ENCODE measurements at regions of chr15 and their contacts with region 1.

Region 1: GRCh38 chr15:60585743-60586708 is 107.1 kb upstream of the ICE2 start:
- DNase-seq: peak; percentile 78
- ATAC-seq: peak; percentile 81
- H3K4me3 ChIP-seq: no peak overlapping the region
- H3K27ac ChIP-seq: no peak overlapping the region
- H3K4me1 ChIP-seq: peaks cover 17% of the 10 kb centered on the region
- H3K27me3 ChIP-seq: no peaks in the 10 kb centered on the region
- CTCF ChIP-seq: peak; percentile 92
- POLR2A ChIP-seq: 0 out of 2 replicates have a peak, but pooled peaks have one; percentile 37
- RAD21 ChIP-seq: peak; percentile 92

Region 2: DNA sequence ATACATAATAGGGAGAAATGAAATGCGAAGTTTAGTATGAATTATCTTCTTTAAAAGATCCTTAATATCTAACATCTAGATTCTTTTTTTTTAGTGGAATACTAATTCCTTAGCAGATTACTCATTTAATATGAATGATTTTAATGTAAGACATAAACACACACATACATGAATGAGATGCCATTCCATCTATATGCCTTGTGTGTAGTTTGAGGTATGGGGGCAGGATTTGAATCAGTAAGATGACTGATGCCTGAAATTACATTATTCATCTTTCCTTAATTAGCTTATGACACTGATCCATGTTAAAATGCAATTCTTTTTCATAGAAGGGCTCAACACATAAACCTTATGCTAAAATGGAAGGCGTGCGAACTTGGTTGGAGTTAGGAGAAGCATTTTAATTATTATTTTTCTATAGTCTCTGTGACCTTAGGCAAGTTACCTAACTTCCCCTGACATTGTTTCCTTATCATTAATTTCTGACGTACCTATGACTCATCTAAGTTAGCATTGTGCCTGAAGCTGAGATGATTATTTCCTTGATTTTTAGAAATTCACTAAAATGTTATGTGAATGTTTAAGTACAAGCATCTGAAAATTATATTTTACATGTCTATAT is 886.1 kb before region 1 on chr15:
- CTCF ChIA-PET with region 1: no interaction called
- POLR2A ChIA-PET with region 1: no interaction called
- dilution Hi-C with region 1: no loop called
- in situ Hi-C with region 1: no loop called
- intact Hi-C with region 1: no loop called
- DNase-seq: peak; percentile 24
- ATAC-seq: no peak
- H3K4me3 ChIP-seq: no peak overlapping the region
- H3K27ac ChIP-seq: no peak overlapping the region
- H3K4me1 ChIP-seq: no peaks in the 10 kb centered on the region
- H3K27me3 ChIP-seq: no peaks in the 10 kb centered on the region
- CTCF ChIP-seq: no peak
- POLR2A ChIP-seq: no peak
- RAD21 ChIP-seq: no peak

Region 3: GRCh38 chr15:60340207-60340921 is 245.7 kb before region 1 on chr15:
- CTCF ChIA-PET with region 1: no interaction called
- POLR2A ChIA-PET with region 1: no interaction called
- dilution Hi-C with region 1: no loop called
- in situ Hi-C with region 1: no loop called
- intact Hi-C with region 1: no loop called
- DNase-seq: no peak
- ATAC-seq: peak; percentile 31
- H3K4me3 ChIP-seq: no peak overlapping the region
- H3K27ac ChIP-seq: no peak overlapping the region
- H3K4me1 ChIP-seq: no peaks in the 10 kb centered on the region; the same call in 1 of the 2 replicates
- H3K27me3 ChIP-seq: no peaks in the 10 kb centered on the region
- CTCF ChIP-seq: 0 out of 2 replicates have a peak, but pooled peaks have one; percentile 13
- POLR2A ChIP-seq: no peak
- RAD21 ChIP-seq: no peak

Region 4: GRCh38 chr15:60507596-60508424 is 78.2 kb before region 1 on chr15:
- CTCF ChIA-PET with region 1: no interaction called
- POLR2A ChIA-PET with region 1: no interaction called
- dilution Hi-C with region 1: no loop called
- in situ Hi-C with region 1: no loop called
- intact Hi-C with region 1: loop called (anchors 2 kb)
- DNase-seq: peak; percentile 77
- ATAC-seq: peak; percentile 98
- H3K4me3 ChIP-seq: no peak overlapping the region
- H3K27ac ChIP-seq: no peak overlapping the region
- H3K4me1 ChIP-seq: no peaks in the 10 kb centered on the region
- H3K27me3 ChIP-seq: no peaks in the 10 kb centered on the region
- CTCF ChIP-seq: peak; percentile 95
- POLR2A ChIP-seq: no peak
- RAD21 ChIP-seq: peak; percentile 87

Region 5: DNA sequence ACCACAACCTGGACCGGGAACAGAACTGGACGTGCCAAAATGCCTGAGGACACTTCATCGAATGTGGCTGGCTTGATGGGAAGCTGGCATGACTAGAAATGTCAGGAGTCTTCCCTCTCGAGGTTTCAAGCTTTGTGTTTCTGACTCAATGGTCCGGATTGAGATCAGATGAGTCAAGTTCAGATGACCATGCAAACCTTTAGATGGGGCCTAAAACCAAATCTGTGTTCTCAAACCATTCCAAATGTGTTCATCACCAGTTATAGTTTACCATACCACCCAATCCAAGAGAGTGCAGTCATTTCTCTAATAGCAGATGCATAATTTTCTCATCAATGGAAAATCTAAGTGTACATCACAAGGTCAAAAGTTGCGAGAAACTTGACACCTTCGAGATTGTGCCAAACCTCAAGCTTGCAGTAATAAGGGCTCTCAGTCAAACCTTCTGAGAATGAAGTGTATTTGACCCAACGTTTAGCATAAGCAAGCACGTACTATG is 274.0 kb after region 1 on chr15:
- CTCF ChIA-PET with region 1: no interaction called
- POLR2A ChIA-PET with region 1: no interaction called
- dilution Hi-C with region 1: no loop called
- in situ Hi-C with region 1: no loop called
- intact Hi-C with region 1: loop called (anchors 5 kb)
- DNase-seq: peak; percentile 91
- ATAC-seq: peak; percentile 90
- H3K4me3 ChIP-seq: no peak overlapping the region
- H3K27ac ChIP-seq: no peak overlapping the region
- H3K4me1 ChIP-seq: peaks cover 3% of the 10 kb centered on the region; the same call in 1 of the 2 replicates
- H3K27me3 ChIP-seq: peaks cover 6% of the 10 kb centered on the region; the same call in 1 of the 2 replicates
- CTCF ChIP-seq: no peak
- POLR2A ChIP-seq: no peak
- RAD21 ChIP-seq: no peak

Region 6: DNA sequence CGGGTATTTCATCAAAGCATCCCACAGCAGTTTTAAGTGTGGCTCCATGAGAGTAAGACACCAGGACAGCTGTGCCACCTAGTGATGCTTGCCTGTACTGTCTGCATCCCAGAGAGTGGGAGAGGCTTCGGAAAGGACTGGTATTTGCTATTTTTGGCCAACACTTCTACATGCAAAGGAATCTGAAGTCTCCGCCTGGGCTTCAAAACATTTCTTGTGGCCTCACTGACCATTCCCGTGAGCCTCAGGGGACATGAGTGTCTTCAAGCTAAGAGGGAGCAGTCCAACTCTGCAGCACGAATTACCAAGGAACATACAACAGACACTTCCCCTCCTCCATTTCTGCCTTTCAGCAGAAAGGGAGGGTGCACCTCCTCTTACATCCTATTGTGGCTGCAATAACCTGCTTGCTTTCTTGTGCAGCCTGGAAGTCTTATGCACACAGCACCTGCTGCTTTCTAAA is 465.6 kb after region 1 on chr15:
- CTCF ChIA-PET with region 1: interaction called, 11 read pairs
- POLR2A ChIA-PET with region 1: no interaction called
- dilution Hi-C with region 1: no loop called
- in situ Hi-C with region 1: loop called (anchors 5 kb)
- intact Hi-C with region 1: loop called (anchors 1 kb)
- DNase-seq: peak; percentile 78
- ATAC-seq: peak; percentile 95
- H3K4me3 ChIP-seq: no peak overlapping the region
- H3K27ac ChIP-seq: no peak overlapping the region
- H3K4me1 ChIP-seq: peaks cover 15% of the 10 kb centered on the region
- H3K27me3 ChIP-seq: peaks cover 3% of the 10 kb centered on the region; the same call in 1 of the 2 replicates
- CTCF ChIP-seq: peak; percentile 88
- POLR2A ChIP-seq: no peak
- RAD21 ChIP-seq: peak; percentile 90

Region 7: DNA sequence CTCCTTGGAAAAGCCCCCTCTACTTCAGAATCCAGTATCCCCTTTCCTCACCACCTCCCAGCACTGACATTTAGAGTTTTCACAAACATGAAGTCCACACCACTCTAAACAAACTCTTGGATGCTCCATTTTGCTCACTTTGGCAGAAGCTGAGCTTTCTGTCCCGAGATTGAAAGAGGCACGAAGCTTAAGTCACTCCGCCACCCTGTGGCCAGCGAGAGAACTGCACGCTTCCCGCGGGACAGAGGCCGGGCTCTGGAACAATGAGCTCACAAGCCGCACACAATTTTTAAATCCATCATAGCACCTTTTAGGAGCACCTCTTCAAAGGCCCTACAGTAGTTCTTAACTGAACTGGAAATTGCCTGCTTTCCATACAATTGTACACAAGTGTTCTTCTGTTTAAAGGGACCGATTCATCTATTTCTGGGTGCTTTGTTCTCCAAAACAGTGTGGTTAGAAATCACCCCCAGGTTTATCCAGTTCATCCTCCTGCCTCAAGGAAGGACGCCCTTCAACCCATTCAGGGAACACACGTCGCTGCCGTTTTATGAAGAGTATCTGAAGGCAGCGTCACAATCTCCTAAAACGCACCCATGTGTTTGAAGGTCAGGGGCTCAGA is 1248.2 kb after region 1 on chr15:
- CTCF ChIA-PET with region 1: interaction called, 6 read pairs
- POLR2A ChIA-PET with region 1: no interaction called
- dilution Hi-C with region 1: no loop called
- in situ Hi-C with region 1: loop called (anchors 10 kb)
- intact Hi-C with region 1: loop called (anchors 1 kb)
- DNase-seq: peak; percentile 72
- ATAC-seq: peak; percentile 89
- H3K4me3 ChIP-seq: no peak overlapping the region
- H3K27ac ChIP-seq: no peak overlapping the region
- H3K4me1 ChIP-seq: no peaks in the 10 kb centered on the region
- H3K27me3 ChIP-seq: peaks cover 14% of the 10 kb centered on the region
- CTCF ChIP-seq: peak; percentile 92
- POLR2A ChIP-seq: no peak
- RAD21 ChIP-seq: peak; percentile 78